Endothelial cell of umbilical vein (primary cell): ENCODE measurements at regions of chr12 and their contacts with region 1.

Region 1: GRCh38 chr12:89299931-89300330 is 52.4 kb downstream of the DUSP6 start:
- DNase-seq: no peak
- H3K4me3 ChIP-seq: no peak overlapping the region
- H3K27ac ChIP-seq: no peak overlapping the region
- H3K4me1 ChIP-seq: no peaks in the 10 kb centered on the region
- H3K27me3 ChIP-seq: no peaks in the 10 kb centered on the region
- CTCF ChIP-seq: no peak
- POLR2A ChIP-seq: no peak

Region 2: DNA sequence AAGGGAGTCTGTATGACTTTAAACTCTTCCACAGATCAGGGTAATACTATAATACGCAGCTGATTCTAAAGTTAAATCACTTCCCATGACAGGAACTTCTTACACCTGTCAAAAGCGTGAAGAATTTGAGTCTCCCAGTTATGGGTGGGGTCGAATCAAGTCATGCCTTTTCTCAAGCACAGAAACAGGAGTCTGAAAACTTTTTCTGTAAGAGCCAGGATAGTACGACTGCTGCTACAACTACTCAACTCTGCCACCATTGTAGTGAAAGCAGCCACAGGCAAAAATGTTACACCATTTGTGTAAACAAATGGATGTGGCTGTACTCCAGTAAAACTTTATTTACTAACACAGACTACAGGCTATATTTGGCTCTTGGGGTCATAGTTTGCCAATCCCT is 37.9 kb before region 1 on chr12:
- CTCF ChIA-PET with region 1: no interaction called
- POLR2A ChIA-PET with region 1: no interaction called
- dilution Hi-C with region 1: no loop called
- intact Hi-C with region 1: loop called (anchors 5 kb)
- DNase-seq: no peak
- H3K4me3 ChIP-seq: no peak overlapping the region
- H3K27ac ChIP-seq: no peak overlapping the region
- H3K4me1 ChIP-seq: peaks cover 6% of the 10 kb centered on the region
- H3K27me3 ChIP-seq: no peaks in the 10 kb centered on the region
- CTCF ChIP-seq: no peak
- POLR2A ChIP-seq: no peak

Region 3: GRCh38 chr12:89333564-89334252 is 33.8 kb after region 1 on chr12:
- CTCF ChIA-PET with region 1: no interaction called
- POLR2A ChIA-PET with region 1: no interaction called
- dilution Hi-C with region 1: no loop called
- intact Hi-C with region 1: no loop called
- DNase-seq: no peak
- H3K4me3 ChIP-seq: no peak overlapping the region
- H3K27ac ChIP-seq: no peak overlapping the region
- H3K4me1 ChIP-seq: no peaks in the 10 kb centered on the region
- H3K27me3 ChIP-seq: no peaks in the 10 kb centered on the region
- CTCF ChIP-seq: no peak
- POLR2A ChIP-seq: no peak